ENCODE measurements at regions of chr18 and their contacts with region 1.

Region 1: GRCh38 chr18:5879479-5879882 is 15.8 kb downstream of the TMEM200C start:
- DNase-seq: no peak
- H3K4me3 ChIP-seq: no peak overlapping the region
- H3K27ac ChIP-seq: no peak overlapping the region
- H3K4me1 ChIP-seq: no peaks in the 10 kb centered on the region
- H3K27me3 ChIP-seq: no peaks in the 10 kb centered on the region
- CTCF ChIP-seq: peak; percentile 75

Region 2: DNA sequence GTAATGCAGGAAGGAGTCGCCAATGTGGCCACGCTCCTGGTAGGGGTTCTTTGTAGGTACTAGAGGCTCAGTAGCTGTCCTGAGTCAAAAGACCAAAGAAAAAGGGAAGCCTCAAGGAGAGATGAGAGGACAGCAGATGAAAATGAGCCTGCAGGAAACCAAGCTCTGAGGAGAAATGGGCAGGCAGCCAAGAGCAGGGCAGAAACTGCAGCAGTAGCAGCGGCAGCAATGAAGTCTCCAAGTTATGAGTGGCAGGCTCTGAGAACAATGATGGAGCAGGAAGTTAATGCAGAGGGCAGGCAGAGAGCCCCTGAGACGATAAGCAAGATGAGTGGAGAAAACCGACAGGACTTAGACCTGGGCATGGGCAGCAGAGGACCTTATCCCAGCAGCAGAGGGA is 64.0 kb after region 1 on chr18:
- intact Hi-C with region 1: no loop called
- DNase-seq: no peak
- H3K4me3 ChIP-seq: no peak overlapping the region
- H3K27ac ChIP-seq: no peak overlapping the region
- H3K4me1 ChIP-seq: no peaks in the 10 kb centered on the region
- H3K27me3 ChIP-seq: no peaks in the 10 kb centered on the region
- CTCF ChIP-seq: no peak

Region 3: DNA sequence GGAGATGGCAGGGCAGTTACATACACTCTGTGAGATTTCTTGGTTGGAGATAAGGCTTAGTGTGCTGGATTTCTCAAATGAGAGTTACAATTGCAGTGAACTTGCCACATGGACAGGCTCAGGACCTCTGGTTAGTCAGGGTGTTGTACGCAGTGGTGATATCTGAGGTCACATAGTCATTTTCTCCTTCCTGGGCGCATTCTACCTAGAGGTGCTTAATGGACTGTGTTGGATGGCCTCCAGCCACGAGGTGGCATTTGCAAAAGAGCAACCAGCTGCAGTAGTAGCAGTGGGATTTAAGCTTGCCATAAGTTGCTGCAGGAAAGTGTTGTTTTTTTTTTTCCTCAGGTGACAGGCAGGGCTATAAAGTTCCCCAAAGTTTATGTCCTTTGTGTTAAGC is 189.6 kb after region 1 on chr18:
- intact Hi-C with region 1: no loop called
- DNase-seq: no peak
- H3K4me3 ChIP-seq: no peak overlapping the region
- H3K27ac ChIP-seq: no peak overlapping the region
- H3K4me1 ChIP-seq: no peaks in the 10 kb centered on the region
- H3K27me3 ChIP-seq: no peaks in the 10 kb centered on the region
- CTCF ChIP-seq: no peak

Region 4: GRCh38 chr18:6423289-6423688 is 543.8 kb after region 1 on chr18:
- intact Hi-C with region 1: no loop called
- DNase-seq: no peak
- H3K4me3 ChIP-seq: no peak overlapping the region
- H3K27ac ChIP-seq: no peak overlapping the region
- H3K4me1 ChIP-seq: no peaks in the 10 kb centered on the region
- H3K27me3 ChIP-seq: no peaks in the 10 kb centered on the region
- CTCF ChIP-seq: no peak

Region 5: DNA sequence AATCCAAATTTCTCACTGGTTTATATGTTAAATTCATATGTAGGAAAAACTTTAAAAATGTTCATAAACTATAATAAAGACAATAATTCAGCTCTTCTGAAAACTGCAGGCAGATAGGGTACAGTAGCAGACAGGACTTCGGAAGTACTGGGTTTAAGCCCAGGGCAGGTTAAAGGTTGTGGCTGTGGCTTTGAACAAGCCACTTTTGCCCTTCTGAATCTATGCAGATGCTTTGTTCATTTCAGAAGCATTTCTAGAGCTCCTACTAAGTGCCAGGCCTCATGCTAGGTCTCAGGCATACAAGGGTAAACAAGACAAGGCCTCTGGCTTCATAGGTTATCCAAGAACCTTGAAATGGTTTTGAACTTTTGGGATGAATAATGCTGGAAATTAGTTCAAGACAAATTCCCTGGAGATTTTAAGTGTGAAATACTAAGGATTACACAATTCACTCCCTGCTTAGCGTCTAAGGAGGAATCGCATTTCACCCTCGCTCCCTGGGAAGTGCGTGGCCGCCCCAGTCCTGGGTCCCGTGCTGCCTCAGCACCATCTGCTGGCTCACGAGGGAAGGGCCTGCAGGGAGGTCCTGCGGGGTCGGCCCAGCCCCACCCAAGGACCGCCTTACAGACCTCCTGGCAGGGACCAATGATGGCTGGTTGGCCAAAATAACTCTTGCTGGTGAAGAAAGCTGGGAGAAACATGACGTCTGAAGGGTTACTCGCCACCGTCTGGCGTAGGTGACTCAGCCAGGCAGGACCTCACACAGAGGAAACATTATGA is 602.9 kb after region 1 on chr18:
- intact Hi-C with region 1: loop called (anchors 5 kb)
- DNase-seq: peak; percentile 28
- H3K4me3 ChIP-seq: no peak overlapping the region
- H3K27ac ChIP-seq: no peak overlapping the region
- H3K4me1 ChIP-seq: no peaks in the 10 kb centered on the region
- H3K27me3 ChIP-seq: no peaks in the 10 kb centered on the region
- CTCF ChIP-seq: peak; percentile 61